ENCODE measurements at regions of chr12 and their contacts with region 1.

Region 1: DNA sequence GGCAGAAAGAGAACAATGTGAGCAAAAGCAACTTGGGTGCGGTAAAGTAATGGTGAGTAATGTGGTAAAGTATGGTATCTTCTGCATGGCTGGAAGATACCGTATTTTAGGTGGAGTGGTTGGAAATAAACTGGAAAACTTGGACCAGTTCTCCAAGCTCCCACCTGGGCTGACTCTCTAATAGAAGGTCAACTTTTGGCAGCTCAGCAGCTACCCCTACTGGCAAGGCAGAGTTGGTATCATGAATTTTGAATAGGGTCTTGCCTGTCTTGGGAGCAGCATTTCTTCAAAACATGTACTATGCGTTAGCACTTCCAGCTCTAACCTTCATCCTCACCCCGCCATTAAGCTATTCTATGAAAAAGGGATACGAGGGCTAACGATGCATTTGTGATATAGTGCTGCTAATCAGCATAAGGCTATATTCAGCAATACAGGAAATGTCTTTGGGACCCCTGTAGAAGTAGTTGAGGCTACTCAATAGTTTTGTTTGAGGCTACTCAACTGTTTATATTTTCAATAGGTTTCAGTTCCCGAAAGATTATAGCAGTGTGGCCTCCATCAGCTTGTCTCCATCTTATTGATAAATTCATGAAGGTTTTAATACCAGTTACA is 276.3 kb upstream of the FAR2 start:
- DNase-seq: peak; percentile 10 to 55
- ATAC-seq: peak in 5 of 8 donors; percentile 46 to 83 (median 74)
- H3K4me3 ChIP-seq: no peak overlapping the region
- H3K27ac ChIP-seq: no peak overlapping the region
- H3K4me1 ChIP-seq: peaks cover 0 to 8% (median 0%) of the 10 kb centered on the region in 9 donors
- H3K27me3 ChIP-seq: peaks cover 0 to 7% (median 0%) of the 10 kb centered on the region in 7 donors
- CTCF ChIP-seq: peak; percentile 45 to 82 (median 71)

Region 2: GRCh38 chr12:27940756-27941402 is 931.9 kb before region 1 on chr12:
- intact Hi-C with region 1: loop called in 1 of 10 experiments (anchors 10 kb)
- DNase-seq: peak; percentile 61 to 63
- ATAC-seq: peak in 6 of 8 donors; percentile 34 to 85 (median 68)
- H3K4me3 ChIP-seq: no peak overlapping the region
- H3K27ac ChIP-seq: no peak overlapping the region
- H3K4me1 ChIP-seq: no peaks in the 10 kb centered on the region
- H3K27me3 ChIP-seq: no peaks in the 10 kb centered on the region
- CTCF ChIP-seq: peak; percentile 37 to 85 (median 83)

Region 3: GRCh38 chr12:28190321-28191050 is 682.3 kb before region 1 on chr12 and contains the start of gene CCDC91:
- intact Hi-C with region 1: loop called in 1 of 10 experiments (anchors 10 kb)
- DNase-seq: peak; percentile 86 to 87
- ATAC-seq: peak; percentile 91 to 98 (median 92)
- H3K4me3 ChIP-seq: peak within 1 kb of the TSS; percentile 70 to 97 (median 78)
- H3K27ac ChIP-seq: peak within 1 kb of the TSS; percentile 91 to 99 (median 96)
- H3K4me1 ChIP-seq: peaks cover 0 to 22% (median 14%) of the 10 kb centered on the region in 9 donors
- H3K27me3 ChIP-seq: no peaks in the 10 kb centered on the region
- CTCF ChIP-seq: peak in 1 of 9 donors; percentile 28
- total RNA-seq, gene CCDC91: 44.7 to 66.4 (median 56.7) TPM

Region 4: DNA sequence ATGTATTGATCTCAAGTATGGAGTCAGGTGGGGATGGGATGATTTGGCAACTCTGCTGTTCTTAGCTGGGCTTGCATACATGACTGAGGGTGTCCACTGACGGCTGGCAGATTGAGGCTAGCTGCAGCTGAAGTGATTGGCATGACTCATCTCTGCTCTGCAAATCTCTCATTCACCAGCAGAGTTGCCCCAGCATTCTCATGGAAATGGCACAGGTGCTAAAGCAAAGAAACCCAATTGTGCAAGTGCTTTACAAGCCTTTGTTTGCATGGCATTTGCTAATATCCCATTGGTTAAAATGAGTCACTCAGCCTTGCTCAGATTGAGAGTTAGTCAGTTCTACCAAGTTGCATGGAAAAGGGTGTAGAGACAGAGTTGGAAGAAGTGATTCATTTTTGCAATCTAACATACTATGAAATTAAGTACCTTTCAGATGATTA is 113.4 kb before region 1 on chr12:
- intact Hi-C with region 1: loop called in 1 of 10 experiments (anchors 10 kb)
- DNase-seq: no peak
- ATAC-seq: no peak
- H3K4me3 ChIP-seq: no peak overlapping the region
- H3K27ac ChIP-seq: no peak overlapping the region
- H3K4me1 ChIP-seq: no peaks in the 10 kb centered on the region
- H3K27me3 ChIP-seq: no peaks in the 10 kb centered on the region
- CTCF ChIP-seq: no peak

Measured in heart right ventricle (tissue), 16 donors.